ENCODE measurements at regions of chr3 and their contacts with region 1.

Region 1: DNA sequence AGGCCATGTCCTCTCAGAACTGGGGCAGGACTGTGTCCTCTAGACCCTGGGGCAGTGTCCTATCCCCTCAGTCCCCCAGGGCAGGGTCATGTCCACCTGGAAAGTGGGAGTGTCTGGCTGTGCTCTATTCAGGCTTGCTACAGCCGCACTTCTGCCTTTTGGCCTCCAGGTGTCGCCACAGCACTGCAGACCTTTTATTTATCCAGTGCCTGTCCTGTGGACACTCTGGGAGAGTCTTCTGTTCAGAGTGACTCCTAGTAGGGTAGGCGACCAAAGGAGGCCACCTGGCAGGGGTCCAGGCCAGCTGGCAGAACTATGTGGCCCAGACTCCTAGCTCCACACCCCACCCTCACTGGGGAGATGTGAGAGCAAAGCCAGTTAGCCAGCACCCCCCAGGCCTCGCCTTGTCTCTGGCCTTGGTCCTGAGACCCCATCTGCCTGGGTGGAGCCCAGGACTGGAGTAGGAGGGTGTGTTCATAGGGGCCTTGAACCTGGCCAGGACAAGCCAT is 3.9 kb downstream of the TMIE start:
- DNase-seq: peak; percentile 76 to 78
- H3K4me3 ChIP-seq: no peak overlapping the region
- H3K27ac ChIP-seq: no peak overlapping the region
- H3K4me1 ChIP-seq: peaks cover 0 to 5% of the 10 kb centered on the region in 2 donors
- H3K27me3 ChIP-seq: peaks cover 0 to 6% of the 10 kb centered on the region in 2 donors
- CTCF ChIP-seq: peak; percentile 91 to 98 (median 98)
- POLR2A ChIP-seq: no peak

Region 2: DNA sequence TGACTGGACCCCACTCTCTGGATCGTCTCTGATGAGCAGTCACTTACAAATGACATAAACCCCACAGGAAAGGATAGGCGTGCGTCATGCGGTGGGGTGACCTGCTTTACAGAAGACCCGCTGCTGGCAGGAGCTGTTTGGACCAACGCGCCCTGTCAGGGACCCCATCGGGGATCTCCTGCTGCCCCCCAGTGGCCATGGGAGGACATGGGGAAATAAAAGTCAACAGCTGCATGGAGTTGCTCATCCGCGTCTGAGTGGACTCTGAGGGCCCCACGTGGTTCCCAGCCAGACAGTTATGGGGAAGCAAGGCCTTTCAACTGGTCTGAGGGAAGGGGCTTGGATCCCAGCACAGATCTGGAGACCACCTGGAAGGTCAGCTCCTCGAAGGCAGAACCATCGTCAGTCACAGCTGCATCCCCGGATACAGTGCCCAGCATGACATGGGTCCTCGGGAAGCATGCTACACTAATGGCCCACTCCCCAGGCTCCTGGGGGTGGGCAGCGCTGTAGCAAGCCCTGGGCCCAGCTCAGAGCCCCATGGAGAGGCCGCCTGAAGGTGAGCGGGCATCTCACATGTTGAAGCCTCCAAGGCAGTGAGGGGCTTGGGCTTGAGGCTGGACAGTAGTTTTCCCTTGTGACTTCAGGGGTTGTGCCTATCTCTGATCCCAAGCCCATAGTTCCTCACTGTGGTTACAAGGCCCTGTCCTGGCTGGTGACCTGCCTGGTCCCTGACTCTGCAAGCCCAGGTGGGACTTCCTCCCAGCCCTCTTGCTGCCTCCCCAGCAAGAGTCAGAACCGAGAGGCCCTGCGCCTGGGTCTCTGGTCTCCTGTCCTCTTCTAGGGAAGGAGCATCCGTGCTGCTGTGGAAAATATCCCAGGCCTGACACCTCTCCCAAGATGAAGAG is 204.7 kb after region 1 on chr3:
- intact Hi-C with region 1: loop called (anchors 5 kb)
- DNase-seq: peak; percentile 83 to 86
- H3K4me3 ChIP-seq: no peak overlapping the region
- H3K27ac ChIP-seq: no peak overlapping the region
- H3K4me1 ChIP-seq: peaks cover 0 to 8% of the 10 kb centered on the region in 2 donors
- H3K27me3 ChIP-seq: no peaks in the 10 kb centered on the region
- CTCF ChIP-seq: peak; percentile 85 to 89 (median 88)
- POLR2A ChIP-seq: no peak

Region 3: DNA sequence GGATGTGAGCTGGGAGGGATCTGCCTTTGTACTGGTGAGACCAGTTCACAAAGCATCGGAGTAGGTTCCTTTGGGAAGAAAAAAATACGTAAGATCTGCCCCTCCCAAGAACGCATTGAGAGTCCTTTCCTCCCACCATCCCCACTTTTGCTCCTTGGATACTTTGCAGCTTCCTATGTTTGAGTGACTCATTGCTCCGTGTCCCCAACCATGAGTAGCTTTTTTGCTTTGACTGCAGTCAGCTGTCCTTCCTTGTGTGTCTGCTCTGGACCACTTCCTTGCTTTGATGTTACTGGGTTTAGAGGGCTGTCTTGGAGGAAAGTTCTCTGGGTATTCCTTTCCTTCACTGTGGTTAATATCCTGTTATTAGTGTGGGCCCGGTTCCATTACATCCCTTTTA is 632.6 kb after region 1 on chr3:
- intact Hi-C with region 1: loop called (anchors 10 kb)
- DNase-seq: no peak
- H3K4me3 ChIP-seq: no peak overlapping the region
- H3K27ac ChIP-seq: no peak overlapping the region
- H3K4me1 ChIP-seq: no peaks in the 10 kb centered on the region
- H3K27me3 ChIP-seq: no peaks in the 10 kb centered on the region
- CTCF ChIP-seq: no peak
- POLR2A ChIP-seq: no peak

Measured in uterus (tissue), 4 donors.